ENCODE measurements at regions of chr5 and their contacts with region 1.

Region 1: GRCh38 chr5:15948190-15948589 is 231.4 kb downstream of the MARCHF11 start:
- DNase-seq: peak; percentile 8
- ATAC-seq: 0 out of 2 replicates have a peak, but pooled peaks have one; percentile 32
- H3K4me3 ChIP-seq: no peak overlapping the region
- H3K27ac ChIP-seq: no peak overlapping the region
- H3K4me1 ChIP-seq: peaks cover 3% of the 10 kb centered on the region; the same call in 1 of the 2 replicates
- H3K27me3 ChIP-seq: no peaks in the 10 kb centered on the region
- CTCF ChIP-seq: no peak; the same call in 1 of the 2 replicates
- POLR2A ChIP-seq: no peak
- RAD21 ChIP-seq: peak; percentile 25; the same call in 1 of the 2 replicates

Region 2: GRCh38 chr5:15898641-15899040 is 49.5 kb before region 1 on chr5:
- CTCF ChIA-PET with region 1: no interaction called
- POLR2A ChIA-PET with region 1: no interaction called
- dilution Hi-C with region 1: no loop called
- in situ Hi-C with region 1: no loop called
- intact Hi-C with region 1: loop called (anchors 1 kb)
- DNase-seq: no peak
- ATAC-seq: no peak
- H3K4me3 ChIP-seq: no peak overlapping the region
- H3K27ac ChIP-seq: no peak overlapping the region
- H3K4me1 ChIP-seq: peaks cover 1% of the 10 kb centered on the region; the same call in 1 of the 2 replicates
- H3K27me3 ChIP-seq: no peaks in the 10 kb centered on the region
- CTCF ChIP-seq: no peak
- POLR2A ChIP-seq: no peak
- RAD21 ChIP-seq: no peak

Measured in IMR-90 (cell line).